CD8-positive, alpha-beta T cell (primary cell): ENCODE measurements at regions of chr10 and their contacts with region 1.

Region 1: DNA sequence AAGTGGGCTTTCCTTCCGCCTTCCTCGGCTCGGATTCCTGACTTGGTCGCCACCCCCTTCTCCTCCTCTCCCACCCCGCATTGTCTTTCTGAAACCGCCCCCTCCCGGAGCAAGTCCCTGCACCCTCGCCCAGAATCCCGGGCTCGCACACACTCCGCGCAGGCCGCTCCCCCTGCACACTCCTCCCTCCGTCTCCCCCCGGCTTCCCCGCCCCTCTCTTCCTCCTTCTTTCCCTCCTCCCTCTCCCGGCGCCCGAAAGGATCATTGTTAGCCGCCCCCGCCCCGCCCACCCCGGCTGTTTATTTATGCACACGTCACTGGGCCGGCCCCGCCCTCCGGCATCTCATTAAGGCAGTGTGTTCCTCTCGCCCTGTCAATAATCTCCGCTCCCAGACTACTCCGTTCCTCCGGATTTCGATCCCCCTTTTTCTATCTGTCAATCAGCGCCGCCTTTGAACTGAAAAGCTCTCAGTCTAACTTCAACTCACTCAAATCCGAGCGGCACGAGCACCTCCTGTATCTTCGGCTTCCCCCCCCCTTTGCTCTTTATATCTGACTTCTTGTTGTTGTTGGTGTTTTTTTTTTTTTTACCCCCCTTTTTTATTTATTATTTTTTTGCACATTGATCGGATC is at the start of gene TCF7L2:
- DNase-seq: peak; percentile 28 to 89 (median 67)
- ATAC-seq: peak; percentile 66
- H3K4me3 ChIP-seq: peak within 1 kb of the TSS; percentile 73 to 87
- H3K4me3 Mint-ChIP-seq: peak within 1 kb of the TSS; percentile 92
- H3K27ac ChIP-seq: peak within 1 kb of the TSS; percentile 50 to 54
- H3K27ac Mint-ChIP-seq: peak within 1 kb of the TSS; percentile 92
- H3K4me1 ChIP-seq: peaks cover 5% of the 10 kb centered on the region
- H3K4me1 Mint-ChIP-seq: peaks cover 24% of the 10 kb centered on the region
- H3K27me3 ChIP-seq: peaks cover 0 to 2% of the 10 kb centered on the region in 2 experiments
- H3K27me3 Mint-ChIP-seq: peaks cover 2% of the 10 kb centered on the region
- CTCF ChIP-seq: no peak
- total RNA-seq, gene TCF7L2: 8.6 to 9.6 TPM

Region 2: GRCh38 chr10:112183329-112184051 is 766.5 kb before region 1 on chr10 and contains the start of gene GPAM:
- CTCF ChIA-PET with region 1: no interaction called
- POLR2A ChIA-PET with region 1: no interaction called
- intact Hi-C with region 1: loop called in 1 of 2 experiments (anchors 5 kb)
- DNase-seq: peak; percentile 95 to 100 (median 99)
- ATAC-seq: peak; percentile 98
- H3K4me3 ChIP-seq: peak within 1 kb of the TSS; percentile 65 to 92
- H3K4me3 Mint-ChIP-seq: peak within 1 kb of the TSS; percentile 87
- H3K27ac ChIP-seq: peak within 1 kb of the TSS; percentile 76 to 78
- H3K27ac Mint-ChIP-seq: peak within 1 kb of the TSS; percentile 93
- H3K4me1 ChIP-seq: peaks cover 17% of the 10 kb centered on the region
- H3K4me1 Mint-ChIP-seq: peaks cover 28% of the 10 kb centered on the region
- H3K27me3 ChIP-seq: no peaks in the 10 kb centered on the region
- H3K27me3 Mint-ChIP-seq: no peaks in the 10 kb centered on the region
- CTCF ChIP-seq: no peak
- total RNA-seq, gene GPAM: 3.2 to 4.2 TPM

Region 3: GRCh38 chr10:112446855-112447711 is 502.9 kb before region 1 on chr10 and contains the starts of genes VTI1A and ZDHHC6:
- CTCF ChIA-PET with region 1: no interaction called
- POLR2A ChIA-PET with region 1: no interaction called
- intact Hi-C with region 1: loop called in 1 of 2 experiments (anchors 5 kb)
- DNase-seq: peak; percentile 68 to 92 (median 85)
- ATAC-seq: peak; percentile 88
- H3K4me3 ChIP-seq: peak within 1 kb of the TSS; percentile 93 to 96
- H3K4me3 Mint-ChIP-seq: peak within 1 kb of the TSS; percentile 94
- H3K27ac ChIP-seq: peak within 1 kb of the TSS; percentile 91 to 92
- H3K27ac Mint-ChIP-seq: peak within 1 kb of the TSS; percentile 95
- H3K4me1 ChIP-seq: peaks cover 24% of the 10 kb centered on the region
- H3K4me1 Mint-ChIP-seq: peaks cover 66% of the 10 kb centered on the region
- H3K27me3 ChIP-seq: no peaks in the 10 kb centered on the region
- H3K27me3 Mint-ChIP-seq: no peaks in the 10 kb centered on the region
- CTCF ChIP-seq: no peak
- total RNA-seq, gene VTI1A: 59.0 to 62.7 TPM
- total RNA-seq, gene ZDHHC6: 41.4 to 41.7 TPM

Region 4: GRCh38 chr10:113007032-113007771 is 57.2 kb after region 1 on chr10:
- CTCF ChIA-PET with region 1: no interaction called
- POLR2A ChIA-PET with region 1: no interaction called
- intact Hi-C with region 1: loop called (anchors 1 to 2 kb)
- DNase-seq: peak; percentile 5 to 87 (median 36)
- ATAC-seq: peak; percentile 88
- H3K4me3 ChIP-seq: peak overlapping the region; percentile 23 to 34
- H3K4me3 Mint-ChIP-seq: peak overlapping the region; percentile 80
- H3K27ac ChIP-seq: no peak overlapping the region
- H3K27ac Mint-ChIP-seq: peak overlapping the region; percentile 42
- H3K4me1 ChIP-seq: peaks cover 32% of the 10 kb centered on the region
- H3K4me1 Mint-ChIP-seq: peaks cover 36% of the 10 kb centered on the region
- H3K27me3 ChIP-seq: peaks cover 0 to 2% of the 10 kb centered on the region in 2 experiments
- H3K27me3 Mint-ChIP-seq: peaks cover 34% of the 10 kb centered on the region
- CTCF ChIP-seq: no peak

Region 5: GRCh38 chr10:113108212-113108835 is 158.3 kb after region 1 on chr10:
- CTCF ChIA-PET with region 1: no interaction called
- POLR2A ChIA-PET with region 1: no interaction called
- intact Hi-C with region 1: loop called in 1 of 2 experiments (anchors 10 kb)
- DNase-seq: peak in 4 of 9 experiments; percentile 17 to 36 (median 29)
- ATAC-seq: peak; percentile 49
- H3K4me3 ChIP-seq: no peak overlapping the region
- H3K4me3 Mint-ChIP-seq: no peak overlapping the region
- H3K27ac ChIP-seq: no peak overlapping the region
- H3K27ac Mint-ChIP-seq: no peak overlapping the region
- H3K4me1 ChIP-seq: no peaks in the 10 kb centered on the region
- H3K4me1 Mint-ChIP-seq: peaks cover 2% of the 10 kb centered on the region
- H3K27me3 ChIP-seq: no peaks in the 10 kb centered on the region
- H3K27me3 Mint-ChIP-seq: no peaks in the 10 kb centered on the region
- CTCF ChIP-seq: peak; percentile 59

Region 6: DNA sequence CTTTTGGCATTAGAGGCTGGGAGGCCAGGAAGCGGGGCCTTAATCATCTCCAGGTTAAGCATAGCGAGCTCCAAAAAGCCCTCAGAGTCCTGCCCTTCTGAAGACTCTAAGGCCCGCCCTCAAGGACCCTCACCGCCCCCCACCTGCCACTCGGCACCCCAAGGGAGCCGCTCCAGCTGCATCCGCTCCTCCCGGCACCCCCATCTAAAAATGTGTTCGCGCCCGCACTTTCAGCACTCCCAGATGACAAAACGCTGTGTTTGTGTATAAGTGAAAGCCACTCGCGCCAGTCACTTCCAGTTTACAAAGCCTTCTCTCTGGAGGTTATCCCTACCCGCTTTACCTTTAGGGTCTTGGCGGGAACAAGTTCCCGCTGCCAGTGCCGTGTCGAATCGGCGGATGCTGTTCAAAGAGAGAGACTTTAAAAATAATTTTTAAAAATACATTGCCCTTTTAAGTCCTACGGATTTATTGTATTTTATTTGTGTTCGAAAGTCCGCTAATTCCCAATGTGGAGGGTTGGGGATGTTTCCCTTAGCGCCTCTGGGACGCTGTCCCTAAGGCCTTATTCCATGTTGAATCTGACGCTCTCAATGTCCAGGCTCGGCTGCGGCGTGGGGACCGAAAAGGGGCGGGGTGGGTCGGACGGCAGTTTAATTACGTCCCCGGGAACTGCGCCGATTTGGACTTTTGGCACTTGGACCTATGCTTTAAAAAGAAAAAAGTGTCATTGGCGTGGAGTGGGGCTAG is 904.2 kb after region 1 on chr10 and contains the starts of genes DCLRE1A and NHLRC2:
- CTCF ChIA-PET with region 1: no interaction called
- POLR2A ChIA-PET with region 1: no interaction called
- intact Hi-C with region 1: loop called in 1 of 2 experiments (anchors 10 kb)
- DNase-seq: peak; percentile 39 to 80 (median 64)
- ATAC-seq: peak; percentile 43
- H3K4me3 ChIP-seq: peak within 1 kb of the TSS; percentile 76 to 84
- H3K4me3 Mint-ChIP-seq: peak within 1 kb of the TSS; percentile 95
- H3K27ac ChIP-seq: peak within 1 kb of the TSS; percentile 73 to 83
- H3K27ac Mint-ChIP-seq: peak within 1 kb of the TSS; percentile 93
- H3K4me1 ChIP-seq: peaks cover 30% of the 10 kb centered on the region
- H3K4me1 Mint-ChIP-seq: peaks cover 63% of the 10 kb centered on the region
- H3K27me3 ChIP-seq: no peaks in the 10 kb centered on the region
- H3K27me3 Mint-ChIP-seq: no peaks in the 10 kb centered on the region
- CTCF ChIP-seq: no peak
- total RNA-seq, gene DCLRE1A: 0.49 to 0.89 TPM
- total RNA-seq, gene NHLRC2: 6.3 to 7.0 TPM